ENCODE measurements at regions of chr17 and their contacts with region 1.

Region 1: DNA sequence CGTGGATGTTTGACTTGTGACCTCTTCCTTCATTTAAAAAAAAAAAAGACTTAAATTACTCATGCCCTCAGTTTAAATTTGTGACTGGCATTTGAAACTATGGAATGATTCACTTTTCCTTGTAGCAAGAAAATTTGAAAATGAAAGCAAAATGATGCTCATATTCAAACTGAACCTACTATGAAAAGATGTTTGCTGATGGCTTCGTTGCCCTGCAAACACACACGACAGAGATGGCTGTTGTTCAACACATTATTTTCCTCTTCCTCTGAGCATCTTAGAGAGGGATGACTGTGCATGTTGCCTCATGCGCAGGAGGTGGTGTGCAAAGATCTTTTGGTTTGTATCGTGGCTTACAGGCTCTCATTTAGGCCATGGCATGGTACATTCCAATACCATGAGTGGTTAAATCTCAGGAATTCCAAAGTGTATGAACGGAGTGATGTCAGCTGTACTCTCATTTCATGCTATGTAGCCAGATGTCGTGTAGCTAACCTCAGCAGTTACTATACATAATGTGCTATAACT is 164.5 kb downstream of the PRKCA start:
- DNase-seq: peak; percentile 93
- ATAC-seq: peak; percentile 92
- H3K4me3 ChIP-seq: peak overlapping the region; percentile 7 to 39
- H3K27ac ChIP-seq: peak overlapping the region; percentile 92
- H3K4me1 ChIP-seq: peaks cover 70% of the 10 kb centered on the region
- H3K27me3 ChIP-seq: no peaks in the 10 kb centered on the region
- CTCF ChIP-seq: no peak

Region 2: GRCh38 chr17:66567234-66568170 is 100.6 kb after region 1 on chr17:
- CTCF ChIA-PET with region 1: no interaction called
- POLR2A ChIA-PET with region 1: no interaction called
- in situ Hi-C with region 1: no loop called
- intact Hi-C with region 1: loop called (anchors 10 kb)
- DNase-seq: peak; percentile 62
- ATAC-seq: peak; percentile 86
- H3K4me3 ChIP-seq: no peak overlapping the region
- H3K27ac ChIP-seq: peak overlapping the region; percentile 75
- H3K4me1 ChIP-seq: peaks cover 41% of the 10 kb centered on the region
- H3K27me3 ChIP-seq: no peaks in the 10 kb centered on the region
- CTCF ChIP-seq: peak; percentile 86

Measured in Panc1 (cell line).